Astrocyte of the cerebellum (primary cell): ENCODE measurements at regions of chr12 and their contacts with region 1.

Region 1: DNA sequence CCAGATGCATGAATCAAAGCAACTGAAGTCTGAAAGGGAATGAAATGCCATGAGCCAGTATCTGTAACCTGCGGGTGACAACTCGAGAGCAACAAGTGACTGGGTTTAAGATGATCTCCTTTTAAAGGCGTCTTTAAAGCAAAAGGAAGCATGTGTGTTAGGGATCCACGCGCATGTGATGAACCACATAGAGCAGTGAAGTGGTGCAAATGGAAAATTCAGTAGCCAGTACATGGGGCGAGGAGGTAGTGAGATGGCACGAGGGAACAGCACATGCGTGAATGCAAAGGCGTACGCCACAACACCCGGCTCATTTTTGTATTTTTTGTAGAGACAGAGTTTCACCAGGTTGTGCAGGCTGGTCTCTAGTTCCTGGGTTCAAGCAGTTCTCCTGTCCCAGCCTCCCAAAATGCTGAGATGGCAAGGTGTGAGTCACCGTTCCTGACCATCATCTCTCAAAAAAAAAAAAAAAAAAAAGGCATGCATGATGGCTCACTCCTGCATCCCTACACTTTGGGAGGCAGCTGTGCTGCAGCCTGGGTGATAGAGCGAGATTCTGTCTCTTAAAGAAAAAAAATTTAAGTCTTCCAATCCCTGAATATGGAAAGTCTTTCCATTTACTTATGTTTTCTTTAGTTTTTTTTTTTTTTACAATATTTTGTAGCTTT is 24.6 kb upstream of the BCL7A start:
- DNase-seq: no peak
- H3K4me3 ChIP-seq: no peak overlapping the region
- CTCF ChIP-seq: no peak

Region 2: GRCh38 chr12:121964813-121965643 is 32.1 kb before region 1 on chr12:
- in situ Hi-C with region 1: loop called (anchors 5 kb)
- DNase-seq: no peak
- H3K4me3 ChIP-seq: no peak overlapping the region
- CTCF ChIP-seq: no peak